ENCODE measurements at regions of chr1 and their contacts with region 1.

Region 1: GRCh38 chr1:248807067-248807737 is 18.5 kb downstream of the SH3BP5L start:
- DNase-seq: peak in 1 of 2 donors; percentile 84
- H3K4me3 ChIP-seq: no peak overlapping the region
- CTCF ChIP-seq: no peak
- POLR2A ChIP-seq: no peak

Region 2: GRCh38 chr1:248622570-248623001 is 184.6 kb before region 1 on chr1:
- intact Hi-C with region 1: loop called (anchors 5 kb)
- DNase-seq: no peak
- H3K4me3 ChIP-seq: no peak overlapping the region
- CTCF ChIP-seq: no peak
- POLR2A ChIP-seq: no peak

Measured in lower leg skin (tissue), 4 donors.